ENCODE measurements at regions of chr1 and their contacts with region 1.

Region 1: DNA sequence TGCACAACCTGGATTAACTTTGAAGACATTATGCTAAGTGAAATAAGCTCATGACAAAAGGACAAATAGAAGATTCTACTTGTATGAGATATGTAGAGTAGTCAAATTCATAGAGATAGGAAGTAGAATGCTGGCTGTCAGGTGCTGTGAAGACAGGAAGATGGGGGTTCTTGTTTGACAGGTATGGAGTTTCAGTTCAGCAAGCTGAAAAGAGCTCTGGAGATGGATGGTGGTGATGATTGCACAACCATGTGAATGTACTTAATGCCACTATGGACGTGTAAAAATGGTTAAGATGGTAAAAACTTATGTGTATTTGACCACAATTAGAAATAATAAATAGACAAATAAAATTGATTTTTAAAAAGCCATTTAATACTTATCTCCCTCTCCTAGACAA is 169.8 kb upstream of the DUSP10 start:
- DNase-seq: no peak
- ATAC-seq: peak; percentile 45
- H3K4me3 Mint-ChIP-seq: no peak overlapping the region
- H3K27ac Mint-ChIP-seq: no peak overlapping the region
- H3K4me1 Mint-ChIP-seq: peaks cover 16% of the 10 kb centered on the region
- H3K27me3 Mint-ChIP-seq: no peaks in the 10 kb centered on the region
- CTCF ChIP-seq: no peak

Region 2: GRCh38 chr1:221897321-221897721 is 14.4 kb before region 1 on chr1:
- CTCF ChIA-PET with region 1: no interaction called
- POLR2A ChIA-PET with region 1: no interaction called
- intact Hi-C with region 1: loop called (anchors 2 kb)
- DNase-seq: no peak
- ATAC-seq: no peak
- H3K4me3 Mint-ChIP-seq: no peak overlapping the region
- H3K27ac Mint-ChIP-seq: no peak overlapping the region
- H3K4me1 Mint-ChIP-seq: no peaks in the 10 kb centered on the region
- H3K27me3 Mint-ChIP-seq: no peaks in the 10 kb centered on the region
- CTCF ChIP-seq: no peak

Region 3: DNA sequence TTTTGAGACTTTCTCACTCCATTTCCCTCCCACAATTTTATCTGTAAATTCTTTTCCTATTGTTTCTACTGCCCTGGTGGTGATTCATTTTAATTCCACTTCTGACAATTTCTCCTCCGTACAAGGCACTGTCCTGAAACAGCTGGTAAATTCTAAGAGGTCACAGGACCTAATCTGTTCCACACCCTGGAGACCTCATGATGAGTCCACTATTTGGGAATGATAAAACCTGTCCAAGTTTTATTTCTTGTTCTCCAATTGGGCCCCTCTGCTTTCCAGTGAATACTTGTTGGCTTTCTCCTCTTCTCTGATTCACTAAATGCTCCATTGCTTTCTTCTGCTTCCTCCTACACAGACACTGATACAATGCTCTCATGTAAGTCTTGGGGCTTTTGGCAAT is 173.3 kb after region 1 on chr1:
- CTCF ChIA-PET with region 1: no interaction called
- POLR2A ChIA-PET with region 1: no interaction called
- intact Hi-C with region 1: no loop called
- DNase-seq: no peak
- ATAC-seq: no peak
- H3K4me3 Mint-ChIP-seq: no peak overlapping the region
- H3K27ac Mint-ChIP-seq: no peak overlapping the region
- H3K4me1 Mint-ChIP-seq: peaks cover 5% of the 10 kb centered on the region
- H3K27me3 Mint-ChIP-seq: peaks cover 3% of the 10 kb centered on the region
- CTCF ChIP-seq: no peak

Measured in activated B cell treated with CpG ODN at 0.5 μM for 24 hours (primary cell).